ENCODE measurements at regions of chr2 and their contacts with region 1.

Region 1: GRCh38 chr2:176187899-176188773 is at the start of gene HOXD1:
- DNase-seq: peak; percentile 71
- ATAC-seq: peak; percentile 85
- H3K4me3 ChIP-seq: peak within 1 kb of the TSS; percentile 59 to 72 (median 68)
- H3K27ac ChIP-seq: peak within 1 kb of the TSS; percentile 85
- H3K4me1 ChIP-seq: peaks cover 91% of the 10 kb centered on the region
- H3K27me3 ChIP-seq: peaks cover 0 to 5% of the 10 kb centered on the region in 2 experiments; a peak in 1 of 5 replicates
- CTCF ChIP-seq: no peak; the same call in 1 of the 2 replicates
- EP300 ChIP-seq: peak in 1 of 2 experiments; percentile 17; a peak in 1 of 4 replicates
- POLR2A ChIP-seq: peak; percentile 75 to 83
- RAD21 ChIP-seq: peak; percentile 34; the same call in 1 of the 2 replicates
- total RNA-seq, gene HOXD1: 10.0 and 10.4 TPM in 2 replicates

Region 2: GRCh38 chr2:176110975-176111663 is 77.0 kb before region 1 on chr2:
- CTCF ChIA-PET with region 1: no interaction called
- POLR2A ChIA-PET with region 1: no interaction called
- in situ Hi-C with region 1: no loop called
- intact Hi-C with region 1: no loop called
- DNase-seq: peak; percentile 50
- ATAC-seq: peak; percentile 62
- H3K4me3 ChIP-seq: no peak overlapping the region
- H3K27ac ChIP-seq: no peak overlapping the region
- H3K4me1 ChIP-seq: peaks cover 14% of the 10 kb centered on the region
- H3K27me3 ChIP-seq: peaks cover 16 to 88% of the 10 kb centered on the region in 2 experiments; a peak in 4 of 5 replicates
- CTCF ChIP-seq: peak; percentile 87
- EP300 ChIP-seq: no peak
- POLR2A ChIP-seq: no peak
- RAD21 ChIP-seq: peak; percentile 32; the same call in 1 of the 2 replicates

Region 3: GRCh38 chr2:176174824-176175708 is 13.1 kb before region 1 on chr2:
- CTCF ChIA-PET with region 1: no interaction called
- POLR2A ChIA-PET with region 1: interaction called, 21 read pairs
- in situ Hi-C with region 1: no loop called
- intact Hi-C with region 1: no loop called
- DNase-seq: no peak
- ATAC-seq: peak; percentile 56
- H3K4me3 ChIP-seq: peak overlapping the region in 2 of 3 experiments; percentile 29 to 42; a peak in 3 of 6 replicates
- H3K27ac ChIP-seq: no peak overlapping the region
- H3K4me1 ChIP-seq: peaks cover 47% of the 10 kb centered on the region
- H3K27me3 ChIP-seq: peaks cover 0 to 5% of the 10 kb centered on the region in 2 experiments; a peak in 2 of 5 replicates
- CTCF ChIP-seq: no peak
- EP300 ChIP-seq: no peak
- POLR2A ChIP-seq: no peak
- RAD21 ChIP-seq: no peak

Region 4: DNA sequence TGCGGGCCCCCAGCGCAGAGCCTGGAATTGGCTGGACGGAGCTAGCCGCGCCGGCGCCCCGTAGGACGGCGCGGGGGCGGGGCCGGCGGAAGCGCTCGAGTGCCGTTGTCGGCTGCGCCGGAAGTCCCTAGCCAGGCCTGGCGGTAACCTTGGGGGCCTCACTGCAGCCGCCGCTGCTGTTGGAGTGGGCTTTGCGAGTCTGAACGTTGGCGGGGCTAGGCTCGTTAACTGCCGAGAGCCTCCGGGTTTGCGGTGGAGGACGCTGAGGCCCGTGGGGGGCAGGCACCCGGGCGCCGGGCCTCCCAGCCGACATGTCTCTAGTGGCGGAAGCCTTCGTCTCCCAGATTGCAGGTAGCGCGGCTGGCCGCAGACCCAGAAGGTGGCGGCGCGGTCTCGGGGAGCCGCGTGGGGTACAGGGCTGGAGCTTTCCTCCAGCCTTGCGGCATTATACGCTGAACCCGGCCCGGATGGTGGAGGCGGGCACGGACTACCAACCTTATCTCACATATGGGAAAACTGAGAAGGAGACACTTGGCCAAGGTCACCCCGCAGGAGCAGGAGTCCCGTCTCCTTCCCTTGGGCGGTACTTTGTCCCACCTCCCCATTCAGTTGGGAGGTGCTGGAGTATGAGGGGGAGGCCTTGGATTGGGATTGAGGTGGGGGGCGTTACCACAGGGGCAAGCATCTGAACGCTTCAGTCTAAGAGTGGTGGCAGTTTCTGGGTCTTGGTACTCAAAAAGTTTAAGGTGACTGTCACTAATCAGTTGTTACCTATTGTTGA is 81.4 kb after region 1 on chr2 and contains the start of gene MTX2:
- CTCF ChIA-PET with region 1: no interaction called
- POLR2A ChIA-PET with region 1: interaction called, 9 read pairs
- in situ Hi-C with region 1: no loop called
- intact Hi-C with region 1: loop called (anchors 5 kb)
- DNase-seq: peak; percentile 80
- ATAC-seq: peak; percentile 99
- H3K4me3 ChIP-seq: peak within 1 kb of the TSS; percentile 89 to 100 (median 99)
- H3K27ac ChIP-seq: peak within 1 kb of the TSS; percentile 89
- H3K4me1 ChIP-seq: peaks cover 33% of the 10 kb centered on the region
- H3K27me3 ChIP-seq: no peaks in the 10 kb centered on the region; a peak in 2 of 5 replicates
- CTCF ChIP-seq: peak; percentile 42
- EP300 ChIP-seq: 0 out of 4 replicates have a peak, but pooled peaks of 1 of the 2 experiments have one; percentile 8
- POLR2A ChIP-seq: peak; percentile 87 to 96
- RAD21 ChIP-seq: peak; percentile 76
- total RNA-seq, gene MTX2: 75.7 and 96.1 TPM in 2 replicates

Region 5: DNA sequence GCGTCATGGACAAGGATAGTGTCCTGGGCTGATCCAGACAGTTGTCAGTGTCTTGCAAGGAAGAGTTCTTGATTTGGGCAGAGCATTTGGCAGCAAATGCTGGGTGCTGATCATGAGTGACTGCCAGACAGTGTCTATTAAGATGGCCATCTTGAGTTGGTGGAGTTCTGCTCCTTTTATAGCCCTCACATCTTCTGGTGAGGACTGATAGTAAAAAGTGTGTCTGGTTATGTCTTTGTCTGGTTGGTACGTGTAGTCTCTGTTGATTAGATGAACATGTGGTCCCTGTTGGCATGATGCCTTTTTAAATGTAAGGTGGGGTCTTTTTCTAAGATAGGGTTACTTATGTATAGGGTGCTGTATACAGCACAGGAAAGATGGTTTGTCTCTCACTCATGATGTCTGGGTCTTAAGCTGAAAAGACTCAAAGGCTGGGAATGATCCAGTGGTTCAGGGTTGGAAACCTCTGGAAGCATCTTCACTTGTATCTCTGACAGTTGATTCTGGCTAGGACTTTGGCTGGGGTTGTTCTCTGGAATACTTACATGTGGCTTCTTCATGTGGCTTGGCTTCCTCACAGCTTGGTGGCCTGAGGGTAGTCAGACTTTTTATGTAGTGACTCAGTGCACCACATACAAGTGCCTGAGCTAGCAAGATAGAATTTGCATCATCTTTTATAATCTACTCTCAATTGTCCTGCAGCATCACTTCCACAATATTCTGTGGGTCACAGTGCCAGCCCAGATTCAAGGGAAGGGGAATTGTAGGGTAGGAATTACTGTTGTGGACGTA is 92.9 kb after region 1 on chr2:
- CTCF ChIA-PET with region 1: no interaction called
- POLR2A ChIA-PET with region 1: no interaction called
- in situ Hi-C with region 1: no loop called
- intact Hi-C with region 1: no loop called
- DNase-seq: no peak
- ATAC-seq: no peak
- H3K4me3 ChIP-seq: no peak overlapping the region
- H3K27ac ChIP-seq: no peak overlapping the region
- H3K4me1 ChIP-seq: no peaks in the 10 kb centered on the region
- H3K27me3 ChIP-seq: no peaks in the 10 kb centered on the region
- CTCF ChIP-seq: no peak
- EP300 ChIP-seq: no peak
- POLR2A ChIP-seq: no peak
- RAD21 ChIP-seq: no peak

Measured in HepG2 (cell line).